ENCODE measurements at regions of chr7 and their contacts with region 1.

Region 1: GRCh38 chr7:30740424-30741181 is 11.3 kb upstream of the INMT start:
- DNase-seq: peak; percentile 79
- H3K4me3 Mint-ChIP-seq: no peak overlapping the region
- H3K27ac Mint-ChIP-seq: peak overlapping the region; percentile 19
- H3K4me1 Mint-ChIP-seq: peaks cover 42% of the 10 kb centered on the region
- H3K27me3 Mint-ChIP-seq: peaks cover 2% of the 10 kb centered on the region

Region 2: GRCh38 chr7:30692438-30692837 is 48.2 kb before region 1 on chr7:
- CTCF ChIA-PET with region 1: interaction called, 10 read pairs
- POLR2A ChIA-PET with region 1: no interaction called
- DNase-seq: no peak
- H3K4me3 Mint-ChIP-seq: no peak overlapping the region
- H3K27ac Mint-ChIP-seq: no peak overlapping the region
- H3K4me1 Mint-ChIP-seq: peaks cover 7% of the 10 kb centered on the region
- H3K27me3 Mint-ChIP-seq: no peaks in the 10 kb centered on the region

Region 3: GRCh38 chr7:30702200-30702599 is 38.4 kb before region 1 on chr7:
- CTCF ChIA-PET with region 1: interaction called, 25 read pairs
- POLR2A ChIA-PET with region 1: no interaction called
- DNase-seq: peak; percentile 59
- H3K4me3 Mint-ChIP-seq: no peak overlapping the region
- H3K27ac Mint-ChIP-seq: peak overlapping the region; percentile 72
- H3K4me1 Mint-ChIP-seq: peaks cover 19% of the 10 kb centered on the region
- H3K27me3 Mint-ChIP-seq: peaks cover 3% of the 10 kb centered on the region

Region 4: DNA sequence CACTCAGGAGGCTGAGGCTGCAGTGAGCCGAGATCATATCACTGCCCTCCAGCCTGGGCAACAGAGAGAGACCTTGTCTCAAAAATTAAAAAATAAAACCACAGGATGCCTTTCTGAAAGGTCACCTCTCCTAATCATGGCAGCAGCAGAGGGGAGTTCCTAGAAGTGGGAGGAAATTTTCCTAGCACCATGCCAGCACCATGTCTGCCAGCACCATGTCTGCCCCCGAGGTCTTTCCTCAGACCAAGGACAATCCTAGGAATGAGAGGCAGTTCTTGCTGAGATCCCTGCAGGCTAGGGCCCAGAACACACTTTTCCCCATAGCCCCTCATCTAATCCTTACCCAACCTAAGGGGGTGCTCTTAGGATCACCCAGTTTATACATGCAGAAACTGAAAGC is 11.0 kb before region 1 on chr7:
- CTCF ChIA-PET with region 1: interaction called, 12 read pairs
- POLR2A ChIA-PET with region 1: no interaction called
- DNase-seq: no peak
- H3K4me3 Mint-ChIP-seq: no peak overlapping the region
- H3K27ac Mint-ChIP-seq: no peak overlapping the region
- H3K4me1 Mint-ChIP-seq: peaks cover 73% of the 10 kb centered on the region
- H3K27me3 Mint-ChIP-seq: no peaks in the 10 kb centered on the region